HEK293 (cell line): ENCODE measurements at regions of chr6 and their contacts with region 1.

Region 1: GRCh38 chr6:131949909-131950766 is 1.0 kb downstream of the CCN2 start:
- H3K4me3 ChIP-seq: peak overlapping the region; percentile 73
- H3K27ac ChIP-seq: peak overlapping the region; percentile 74; the same call in 1 of the 2 replicates
- H3K4me1 ChIP-seq: peaks cover 23% of the 10 kb centered on the region
- CTCF ChIP-seq: peak; percentile 95

Region 2: GRCh38 chr6:131823312-131823903 is 126.7 kb before region 1 on chr6:
- CTCF ChIA-PET with region 1: no interaction called
- POLR2A ChIA-PET with region 1: no interaction called
- H3K4me3 ChIP-seq: no peak overlapping the region
- H3K27ac ChIP-seq: no peak overlapping the region
- H3K4me1 ChIP-seq: peaks cover 11% of the 10 kb centered on the region
- CTCF ChIP-seq: no peak

Region 3: GRCh38 chr6:131900231-131900630 is 49.9 kb before region 1 on chr6:
- CTCF ChIA-PET with region 1: no interaction called
- POLR2A ChIA-PET with region 1: no interaction called
- H3K4me3 ChIP-seq: no peak overlapping the region
- H3K27ac ChIP-seq: no peak overlapping the region
- H3K4me1 ChIP-seq: no peaks in the 10 kb centered on the region
- CTCF ChIP-seq: no peak

Region 4: GRCh38 chr6:131937703-131938631 is 12.2 kb before region 1 on chr6:
- CTCF ChIA-PET with region 1: interaction called, 10 read pairs
- POLR2A ChIA-PET with region 1: interaction called, 62 read pairs
- H3K4me3 ChIP-seq: no peak overlapping the region
- H3K27ac ChIP-seq: no peak overlapping the region
- H3K4me1 ChIP-seq: no peaks in the 10 kb centered on the region
- CTCF ChIP-seq: no peak

Region 5: GRCh38 chr6:131966443-131966842 is 16.3 kb after region 1 on chr6:
- CTCF ChIA-PET with region 1: interaction called, 6 read pairs
- POLR2A ChIA-PET with region 1: interaction called, 23 read pairs
- H3K4me3 ChIP-seq: no peak overlapping the region
- H3K27ac ChIP-seq: no peak overlapping the region
- H3K4me1 ChIP-seq: 0 out of 2 replicates have a peak, but pooled peaks cover 5% of the 10 kb centered on the region
- CTCF ChIP-seq: no peak

Region 6: GRCh38 chr6:132100388-132100990 is 150.4 kb after region 1 on chr6:
- CTCF ChIA-PET with region 1: no interaction called
- POLR2A ChIA-PET with region 1: interaction called, 11 read pairs
- H3K4me3 ChIP-seq: no peak overlapping the region
- H3K27ac ChIP-seq: no peak overlapping the region
- H3K4me1 ChIP-seq: no peaks in the 10 kb centered on the region
- CTCF ChIP-seq: no peak